ENCODE measurements at regions of chr16 and their contacts with region 1.

Region 1: GRCh38 chr16:75647492-75648264 is at the starts of genes KARS1 and TERF2IP:
- DNase-seq: peak; percentile 96
- H3K4me3 Mint-ChIP-seq: peak within 1 kb of the TSS; percentile 99
- H3K27ac Mint-ChIP-seq: peak within 1 kb of the TSS; percentile 100
- H3K4me1 Mint-ChIP-seq: peaks cover 67% of the 10 kb centered on the region
- H3K27me3 Mint-ChIP-seq: no peaks in the 10 kb centered on the region

Region 2: DNA sequence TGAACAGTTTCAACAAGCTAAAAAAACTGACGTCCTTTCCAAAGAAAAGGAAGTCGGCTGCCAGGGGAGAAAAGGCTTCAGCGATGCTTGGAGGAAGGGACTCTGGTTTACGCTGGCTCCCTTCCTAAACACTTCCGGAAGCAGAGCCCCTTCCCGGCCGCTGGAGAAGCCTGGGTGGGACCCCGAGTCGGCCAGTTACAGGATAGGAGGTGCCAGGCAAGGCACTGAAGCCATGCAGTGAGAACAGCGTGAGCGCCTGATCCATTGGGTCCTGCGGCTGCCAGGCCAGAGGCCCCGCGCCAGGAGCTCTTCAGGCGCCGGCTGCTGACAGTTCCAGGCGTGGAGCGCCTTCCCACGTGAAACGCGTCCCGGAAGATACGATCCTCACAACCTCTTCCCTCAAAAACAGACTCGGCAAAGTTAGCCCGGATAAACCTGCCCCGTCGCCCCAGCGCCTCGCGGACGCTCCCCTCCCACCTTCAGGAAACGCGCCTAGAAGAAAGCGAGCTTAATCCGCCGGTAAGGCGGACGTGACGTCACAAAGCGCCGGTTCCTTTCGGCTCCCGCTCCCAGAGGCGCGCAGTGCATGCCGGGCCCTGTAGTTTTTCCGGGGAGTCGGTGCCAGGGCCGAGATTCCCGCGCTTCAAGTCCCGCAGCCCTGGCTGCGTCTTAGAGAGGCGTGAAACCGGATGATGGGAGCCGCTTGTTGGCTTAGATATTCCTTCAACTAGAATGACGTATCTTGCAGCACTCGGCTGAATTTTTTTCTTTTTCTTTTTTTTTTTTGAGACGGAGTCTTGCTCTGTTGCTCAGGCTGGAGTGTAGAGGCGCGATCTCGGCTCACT is 24.7 kb before region 1 on chr16 and contains the start of gene ADAT1:
- CTCF ChIA-PET with region 1: interaction called, 13 read pairs
- DNase-seq: peak; percentile 99
- H3K4me3 Mint-ChIP-seq: peak within 1 kb of the TSS; percentile 92
- H3K27ac Mint-ChIP-seq: peak within 1 kb of the TSS; percentile 95
- H3K4me1 Mint-ChIP-seq: peaks cover 51% of the 10 kb centered on the region
- H3K27me3 Mint-ChIP-seq: no peaks in the 10 kb centered on the region

Region 3: DNA sequence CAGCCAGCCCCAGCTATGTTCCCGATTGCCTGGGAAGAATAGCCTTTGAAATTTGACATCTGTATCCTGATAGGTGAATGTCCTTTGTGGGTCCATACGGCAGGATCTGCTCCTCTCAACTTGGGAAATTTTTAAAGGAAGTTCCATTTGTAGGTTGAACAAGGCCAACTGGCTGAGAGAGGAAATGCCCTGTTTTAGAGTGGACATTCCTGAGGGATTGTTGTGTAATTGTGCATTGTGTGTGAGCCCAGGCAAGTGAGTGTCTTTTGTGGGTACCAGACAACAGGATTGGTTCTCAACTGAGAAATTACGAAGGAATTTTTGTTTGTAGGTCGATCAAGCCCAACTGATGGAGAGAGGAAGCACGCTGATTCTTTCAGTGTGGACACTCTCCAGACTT is 31.7 kb after region 1 on chr16:
- CTCF ChIA-PET with region 1: no interaction called
- DNase-seq: no peak
- H3K4me3 Mint-ChIP-seq: no peak overlapping the region
- H3K27ac Mint-ChIP-seq: peak overlapping the region; percentile 4
- H3K4me1 Mint-ChIP-seq: no peaks in the 10 kb centered on the region
- H3K27me3 Mint-ChIP-seq: no peaks in the 10 kb centered on the region